ENCODE measurements at regions of chr9 and their contacts with region 1.

Region 1: GRCh38 chr9:4489919-4490704 is at the start of gene SLC1A1:
- DNase-seq: peak; percentile 93
- H3K4me3 ChIP-seq: peak within 1 kb of the TSS; percentile 83 to 88 (median 84)
- H3K27ac ChIP-seq: peak within 1 kb of the TSS; percentile 78 to 86 (median 80)
- H3K4me1 ChIP-seq: peaks cover 12 to 29% (median 22%) of the 10 kb centered on the region in 4 donors
- H3K27me3 ChIP-seq: no peaks in the 10 kb centered on the region
- CTCF ChIP-seq: no peak
- EP300 ChIP-seq: no peak
- POLR2A ChIP-seq: no peak
- total RNA-seq, gene SLC1A1: 2.0 to 3.5 (median 2.1) TPM

Region 2: GRCh38 chr9:4339357-4339756 is 150.8 kb before region 1 on chr9:
- intact Hi-C with region 1: no loop called
- DNase-seq: peak; percentile 92
- H3K4me3 ChIP-seq: no peak overlapping the region
- H3K27ac ChIP-seq: no peak overlapping the region
- H3K4me1 ChIP-seq: peaks cover 8 to 12% (median 10%) of the 10 kb centered on the region in 4 donors
- H3K27me3 ChIP-seq: no peaks in the 10 kb centered on the region
- CTCF ChIP-seq: peak; percentile 85 to 94 (median 87)
- EP300 ChIP-seq: no peak
- POLR2A ChIP-seq: no peak

Region 3: GRCh38 chr9:4596165-4596922 is 106.2 kb after region 1 on chr9:
- intact Hi-C with region 1: loop called (anchors 10 kb)
- DNase-seq: no peak
- H3K4me3 ChIP-seq: no peak overlapping the region
- H3K27ac ChIP-seq: peak overlapping the region; percentile 40 to 70 (median 52)
- H3K4me1 ChIP-seq: peaks cover 8 to 28% (median 27%) of the 10 kb centered on the region in 4 donors
- H3K27me3 ChIP-seq: no peaks in the 10 kb centered on the region
- CTCF ChIP-seq: no peak
- EP300 ChIP-seq: peak; percentile 82
- POLR2A ChIP-seq: no peak